ENCODE measurements at regions of chr22 and their contacts with region 1.

Region 1: GRCh38 chr22:42444077-42444904 is 12.1 kb upstream of the NFAM1 start:
- DNase-seq: peak; percentile 93
- H3K4me3 ChIP-seq: peak overlapping the region in 3 of 4 donors; percentile 26 to 46 (median 29)
- H3K27ac ChIP-seq: peak overlapping the region; percentile 67 to 81 (median 73)
- H3K4me1 ChIP-seq: peaks cover 5 to 23% (median 16%) of the 10 kb centered on the region in 4 donors
- H3K27me3 ChIP-seq: no peaks in the 10 kb centered on the region
- CTCF ChIP-seq: peak; percentile 51 to 57 (median 56)
- EP300 ChIP-seq: no peak
- POLR2A ChIP-seq: no peak

Region 2: GRCh38 chr22:42090596-42091454 is 353.5 kb before region 1 on chr22 and contains the start of gene NDUFA6:
- in situ Hi-C with region 1: loop called in 1 of 4 experiments (anchors 10 kb)
- intact Hi-C with region 1: no loop called
- DNase-seq: peak; percentile 99
- H3K4me3 ChIP-seq: peak within 1 kb of the TSS; percentile 66 to 78 (median 74)
- H3K27ac ChIP-seq: peak within 1 kb of the TSS; percentile 93 to 98 (median 96)
- H3K4me1 ChIP-seq: peaks cover 15 to 28% (median 19%) of the 10 kb centered on the region in 4 donors
- H3K27me3 ChIP-seq: no peaks in the 10 kb centered on the region
- CTCF ChIP-seq: peak; percentile 84 to 100 (median 91)
- EP300 ChIP-seq: no peak
- POLR2A ChIP-seq: peak; percentile 99
- total RNA-seq, gene NDUFA6: 17.2 to 723 (median 88.7) TPM

Region 3: GRCh38 chr22:42169055-42169469 is 275.2 kb before region 1 on chr22:
- in situ Hi-C with region 1: loop called (anchors 5 to 10 kb)
- intact Hi-C with region 1: loop called (anchors 5 kb)
- DNase-seq: peak; percentile 72
- H3K4me3 ChIP-seq: no peak overlapping the region
- H3K27ac ChIP-seq: no peak overlapping the region
- H3K4me1 ChIP-seq: peaks cover 18 to 27% (median 22%) of the 10 kb centered on the region in 4 donors
- H3K27me3 ChIP-seq: no peaks in the 10 kb centered on the region
- CTCF ChIP-seq: peak; percentile 77 to 94 (median 84)
- EP300 ChIP-seq: no peak
- POLR2A ChIP-seq: no peak

Region 4: GRCh38 chr22:42202669-42203068 is 241.6 kb before region 1 on chr22:
- in situ Hi-C with region 1: no loop called
- intact Hi-C with region 1: no loop called
- DNase-seq: no peak
- H3K4me3 ChIP-seq: no peak overlapping the region
- H3K27ac ChIP-seq: no peak overlapping the region
- H3K4me1 ChIP-seq: peaks cover 0 to 13% (median 0%) of the 10 kb centered on the region in 4 donors
- H3K27me3 ChIP-seq: no peaks in the 10 kb centered on the region
- CTCF ChIP-seq: no peak
- EP300 ChIP-seq: no peak
- POLR2A ChIP-seq: no peak

Region 5: DNA sequence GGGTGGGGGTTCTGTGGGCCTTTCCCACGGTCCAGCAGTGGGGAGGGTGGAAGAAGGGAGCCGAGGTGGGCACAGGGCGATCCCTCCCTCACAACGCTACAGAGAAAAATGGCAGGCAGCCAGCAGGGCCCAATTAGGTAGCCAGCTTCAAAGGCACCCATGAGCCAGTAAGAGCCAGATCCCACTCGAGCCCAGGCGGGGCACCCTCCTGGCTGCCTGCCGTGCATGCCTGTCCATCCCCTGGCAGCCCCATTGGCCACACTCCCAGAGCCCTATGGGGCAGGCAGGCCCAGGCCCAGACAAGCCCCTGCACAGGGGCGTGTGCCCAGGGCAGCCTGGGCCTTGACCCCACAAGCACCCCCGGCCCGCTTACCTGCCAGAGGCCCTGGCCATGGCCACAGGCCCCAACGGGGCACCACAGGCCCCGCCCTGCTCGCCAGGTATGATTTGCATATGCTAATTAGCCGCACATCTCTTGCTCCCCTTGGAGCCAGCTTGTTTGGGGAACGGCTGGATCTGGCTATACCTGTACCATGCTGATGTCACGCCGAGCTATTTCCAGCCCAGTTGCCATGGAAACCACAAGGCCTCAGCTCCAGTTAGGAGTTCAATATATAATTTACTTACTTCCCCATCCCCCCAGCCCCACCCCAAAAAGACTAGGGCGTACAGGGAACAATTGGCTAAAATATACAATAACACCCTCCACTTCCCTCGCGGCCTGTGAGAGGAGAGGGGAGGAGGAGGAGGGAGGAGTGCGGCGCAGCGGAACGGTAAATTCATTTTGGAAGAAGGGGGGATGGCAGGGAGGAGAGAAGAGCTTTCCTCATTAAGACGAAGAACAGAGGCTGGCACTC is 126.4 kb before region 1 on chr22:
- in situ Hi-C with region 1: no loop called
- intact Hi-C with region 1: no loop called
- DNase-seq: peak; percentile 83
- H3K4me3 ChIP-seq: no peak overlapping the region
- H3K27ac ChIP-seq: peak overlapping the region; percentile 82 to 92 (median 89)
- H3K4me1 ChIP-seq: peaks cover 32 to 88% (median 81%) of the 10 kb centered on the region in 4 donors
- H3K27me3 ChIP-seq: no peaks in the 10 kb centered on the region
- CTCF ChIP-seq: no peak
- EP300 ChIP-seq: no peak
- POLR2A ChIP-seq: no peak